Aorta (tissue), 5 donors: ENCODE measurements at regions of chr17 and their contacts with region 1.

Region 1: GRCh38 chr17:28951991-28952975 is 965 bp upstream of the PHF12 start:
- DNase-seq: peak; percentile 98
- ATAC-seq: peak; percentile 93
- H3K4me3 ChIP-seq: peak overlapping the region; percentile 19 to 66
- H3K27ac ChIP-seq: peak overlapping the region; percentile 92 to 98
- H3K4me1 ChIP-seq: no peaks in the 10 kb centered on the region
- H3K27me3 ChIP-seq: no peaks in the 10 kb centered on the region

Region 2: DNA sequence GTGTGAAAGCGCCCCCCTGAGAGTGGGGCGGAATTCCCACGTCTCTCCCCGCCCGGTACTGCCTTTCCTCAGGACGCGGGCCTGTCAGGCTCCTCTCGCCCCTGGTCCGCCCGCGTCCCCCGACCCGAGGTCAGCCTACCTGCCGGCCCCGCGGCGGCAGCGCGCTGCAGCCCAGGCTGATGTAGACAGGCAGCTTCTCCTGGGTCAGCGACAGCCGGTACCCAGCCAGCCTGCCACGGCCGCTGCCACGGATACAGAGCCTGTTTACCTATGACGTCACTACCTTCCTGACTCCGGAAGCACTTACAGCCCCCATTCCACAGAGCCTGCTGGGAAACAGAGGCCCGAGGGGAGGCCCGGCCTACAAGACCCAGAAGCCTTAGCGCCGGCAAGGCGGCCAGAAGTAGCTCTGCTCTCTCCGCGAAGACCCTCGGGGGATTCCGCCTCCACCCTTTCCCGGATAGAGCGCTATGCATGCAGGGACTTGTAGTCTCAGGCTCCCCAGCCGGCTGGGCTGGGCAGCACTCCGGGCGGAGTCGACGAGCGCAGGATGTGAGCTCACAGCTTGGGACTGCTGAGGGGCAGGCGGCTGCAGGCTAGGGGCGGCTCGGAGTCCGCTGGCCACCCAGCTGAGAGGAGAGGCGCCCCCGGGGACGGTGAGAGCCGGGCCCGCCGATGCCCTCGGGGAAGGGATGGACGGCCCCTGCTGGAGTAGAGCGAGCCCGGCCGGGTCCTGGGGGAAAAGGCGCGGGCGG is 616.9 kb before region 1 on chr17 and contains the starts of genes IFT20 and TNFAIP1:
- intact Hi-C with region 1: loop called (anchors 5 to 10 kb)
- DNase-seq: peak; percentile 99 to 100
- ATAC-seq: peak; percentile 99
- H3K4me3 ChIP-seq: peak within 1 kb of the TSS; percentile 48 to 73
- H3K27ac ChIP-seq: peak within 1 kb of the TSS; percentile 15 to 69
- H3K4me1 ChIP-seq: peaks cover 0 to 6% of the 10 kb centered on the region in 2 donors
- H3K27me3 ChIP-seq: no peaks in the 10 kb centered on the region
- total RNA-seq, gene IFT20: 34.5 to 37.2 TPM
- total RNA-seq, gene TNFAIP1: 51.1 to 68.9 TPM

Region 3: DNA sequence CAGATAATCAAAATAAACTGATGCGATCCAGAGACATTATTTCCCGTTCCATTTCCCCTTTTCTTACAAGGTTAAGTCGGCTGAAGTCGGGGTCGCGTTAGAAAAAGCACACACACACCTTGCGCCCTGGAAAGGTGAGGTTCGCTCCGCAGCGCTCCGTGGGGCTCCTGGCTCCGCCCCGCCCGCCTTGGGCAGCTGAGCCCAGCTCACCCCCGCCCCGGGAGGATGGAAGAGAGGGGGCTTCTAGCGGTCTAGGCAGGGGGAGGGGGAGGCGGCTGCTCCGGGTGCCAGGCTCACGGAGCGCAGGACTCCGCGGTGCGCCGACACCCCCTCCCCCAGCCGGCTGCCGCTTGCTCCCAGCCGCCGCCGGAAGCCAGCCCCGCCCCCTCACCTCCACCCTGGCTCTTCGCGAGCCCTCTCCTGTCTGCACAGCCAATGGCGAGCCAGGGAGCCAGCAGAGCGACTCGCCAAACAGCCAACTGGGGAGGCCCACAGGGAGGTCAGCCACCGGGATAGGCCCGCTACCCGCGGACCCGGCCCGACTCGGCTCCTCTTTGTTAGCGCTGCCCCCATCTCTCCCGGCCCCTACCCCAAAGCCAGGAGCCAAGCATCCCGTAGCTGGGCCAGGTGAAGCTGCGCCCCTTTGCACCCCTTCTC is 140.1 kb before region 1 on chr17:
- intact Hi-C with region 1: loop called in 1 of 2 experiments (anchors 5 kb)
- DNase-seq: peak; percentile 99
- ATAC-seq: peak; percentile 99
- H3K4me3 ChIP-seq: peak overlapping the region; percentile 97 to 99
- H3K27ac ChIP-seq: peak overlapping the region; percentile 28 to 87
- H3K4me1 ChIP-seq: peaks cover 0 to under 1% of the 10 kb centered on the region in 2 donors
- H3K27me3 ChIP-seq: no peaks in the 10 kb centered on the region

Region 4: DNA sequence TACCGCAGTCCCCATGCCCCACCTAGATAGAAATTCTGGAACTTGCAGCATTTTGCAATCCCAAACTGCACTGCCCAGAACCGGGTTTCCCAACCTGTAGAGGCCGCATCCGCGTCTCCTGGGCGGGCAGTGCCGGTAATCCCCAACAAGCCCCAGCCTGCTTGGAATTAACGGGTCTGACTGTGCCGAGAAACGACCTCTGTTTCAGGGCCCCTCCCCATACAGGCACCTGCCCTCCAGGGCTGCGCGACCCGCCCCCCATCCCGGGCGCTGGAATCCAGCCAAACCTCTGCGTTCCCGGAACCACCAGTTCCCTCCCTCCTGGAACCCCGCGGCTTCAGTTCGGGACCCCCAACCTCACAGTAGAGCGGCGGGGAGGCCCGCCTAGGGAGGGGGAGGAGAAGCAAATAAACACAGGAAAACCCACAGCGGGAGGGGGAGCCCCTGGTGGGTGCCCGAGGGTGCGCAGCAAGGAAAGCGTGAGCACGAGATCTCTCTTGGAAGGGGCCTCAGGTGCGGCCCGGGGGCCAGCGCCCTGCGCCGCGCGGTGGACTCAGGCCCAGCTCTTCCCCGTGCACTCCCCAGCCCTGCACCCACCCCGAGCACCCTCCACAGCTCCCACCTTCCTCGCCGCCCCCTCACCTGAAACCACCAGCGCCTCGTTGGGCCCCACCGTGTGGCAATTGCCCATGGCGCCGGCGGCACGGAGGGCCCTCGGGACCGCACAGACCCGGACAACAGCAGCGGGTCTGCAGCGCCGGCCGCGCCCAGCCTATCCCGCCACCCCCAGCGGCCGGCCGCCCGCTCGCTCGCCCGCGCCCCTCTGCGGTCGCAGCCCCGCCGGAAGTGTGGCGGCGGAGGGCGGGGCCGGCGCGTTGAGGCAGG is 55.2 kb before region 1 on chr17 and contains the start of gene FLOT2:
- intact Hi-C with region 1: loop called (anchors 5 kb)
- DNase-seq: peak; percentile 81 to 89
- ATAC-seq: peak; percentile 80
- H3K4me3 ChIP-seq: peak within 1 kb of the TSS; percentile 80 to 96
- H3K27ac ChIP-seq: peak within 1 kb of the TSS; percentile 36 to 90
- H3K4me1 ChIP-seq: peaks cover 0 to 5% of the 10 kb centered on the region in 2 donors
- H3K27me3 ChIP-seq: no peaks in the 10 kb centered on the region
- total RNA-seq, gene FLOT2: 99.1 to 108 TPM

Region 5: GRCh38 chr17:28902819-28903545 is 49.3 kb before region 1 on chr17 and contains the start of gene DHRS13:
- intact Hi-C with region 1: loop called (anchors 5 kb)
- DNase-seq: peak; percentile 90 to 96
- ATAC-seq: peak; percentile 92
- H3K4me3 ChIP-seq: peak within 1 kb of the TSS; percentile 38 to 55
- H3K27ac ChIP-seq: peak within 1 kb of the TSS in 1 of 2 donors; percentile 25
- H3K4me1 ChIP-seq: no peaks in the 10 kb centered on the region
- H3K27me3 ChIP-seq: no peaks in the 10 kb centered on the region
- total RNA-seq, gene DHRS13: 4.3 to 6.1 TPM

Region 6: GRCh38 chr17:28916302-28916934 is 35.9 kb before region 1 on chr17:
- intact Hi-C with region 1: loop called in 1 of 2 experiments (anchors 5 kb)
- DNase-seq: no peak
- ATAC-seq: peak; percentile 65
- H3K4me3 ChIP-seq: no peak overlapping the region
- H3K27ac ChIP-seq: no peak overlapping the region
- H3K4me1 ChIP-seq: no peaks in the 10 kb centered on the region
- H3K27me3 ChIP-seq: no peaks in the 10 kb centered on the region

Region 7: GRCh38 chr17:29018788-29019474 is 66.6 kb after region 1 on chr17:
- intact Hi-C with region 1: no loop called
- DNase-seq: no peak
- ATAC-seq: no peak
- H3K4me3 ChIP-seq: no peak overlapping the region
- H3K27ac ChIP-seq: no peak overlapping the region
- H3K4me1 ChIP-seq: no peaks in the 10 kb centered on the region
- H3K27me3 ChIP-seq: no peaks in the 10 kb centered on the region